MCF 10A (cell line): ENCODE measurements at regions of chr10 and their contacts with region 1.

Region 1: DNA sequence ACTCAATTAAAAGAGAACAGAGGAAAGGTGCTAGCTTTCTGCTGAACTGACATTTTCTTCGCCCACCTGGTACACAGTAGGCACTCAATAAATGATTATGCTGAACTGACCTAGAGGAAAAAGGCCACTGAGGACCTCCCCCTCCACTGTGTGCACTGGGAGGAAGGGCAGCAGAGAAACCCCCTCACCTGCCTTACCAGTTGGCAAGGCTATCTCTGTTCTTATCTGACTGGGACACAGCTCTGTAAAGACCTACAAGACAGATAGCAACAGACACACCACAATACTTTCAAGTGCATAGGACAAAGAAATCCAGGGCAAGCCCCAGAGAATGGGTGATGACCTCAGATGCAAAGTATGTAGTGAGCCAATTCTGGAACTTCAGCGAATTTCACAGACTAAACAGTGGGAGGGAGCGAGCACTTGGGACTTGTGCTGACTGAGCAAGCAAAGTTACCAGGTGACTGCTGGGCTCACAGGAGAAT is 30.4 kb downstream of the PDLIM1 start:
- DNase-seq: peak; percentile 73
- H3K4me3 Mint-ChIP-seq: no peak overlapping the region
- H3K27ac Mint-ChIP-seq: peak overlapping the region; percentile 77
- H3K4me1 Mint-ChIP-seq: peaks cover 28% of the 10 kb centered on the region
- H3K27me3 Mint-ChIP-seq: no peaks in the 10 kb centered on the region
- CTCF ChIP-seq: no peak

Region 2: GRCh38 chr10:95273393-95274312 is 13.2 kb after region 1 on chr10:
- CTCF ChIA-PET with region 1: interaction called, 5 read pairs
- POLR2A ChIA-PET with region 1: interaction called, 12 read pairs
- intact Hi-C with region 1: no loop called
- DNase-seq: peak; percentile 82
- H3K4me3 Mint-ChIP-seq: peak overlapping the region; percentile 61
- H3K27ac Mint-ChIP-seq: peak overlapping the region; percentile 97
- H3K4me1 Mint-ChIP-seq: peaks cover 40% of the 10 kb centered on the region
- H3K27me3 Mint-ChIP-seq: no peaks in the 10 kb centered on the region
- CTCF ChIP-seq: no peak

Region 3: GRCh38 chr10:95308389-95309302 is 48.2 kb after region 1 on chr10:
- CTCF ChIA-PET with region 1: no interaction called
- POLR2A ChIA-PET with region 1: no interaction called
- intact Hi-C with region 1: loop called (anchors 5 kb)
- DNase-seq: peak; percentile 98
- H3K4me3 Mint-ChIP-seq: peak overlapping the region; percentile 4
- H3K27ac Mint-ChIP-seq: peak overlapping the region; percentile 6
- H3K4me1 Mint-ChIP-seq: peaks cover 27% of the 10 kb centered on the region
- H3K27me3 Mint-ChIP-seq: peaks cover 12% of the 10 kb centered on the region
- CTCF ChIP-seq: no peak